ENCODE measurements at regions of chr11 and their contacts with region 1.

Region 1: GRCh38 chr11:44315947-44316658 is 6.2 kb upstream of the ALX4 start:
- DNase-seq: peak in 1 of 2 experiments; percentile 64
- H3K4me3 ChIP-seq: peak overlapping the region; percentile 13 to 58 (median 20); a peak in 7 of 8 replicates
- H3K27ac ChIP-seq: no peak overlapping the region
- H3K4me1 ChIP-seq: peaks cover 3 to 34% (median 22%) of the 10 kb centered on the region in 4 experiments
- H3K27me3 ChIP-seq: peaks cover 99 to 100% (median 100%) of the 10 kb centered on the region in 4 experiments
- CTCF ChIP-seq: no peak
- EP300 ChIP-seq: no peak
- POLR2A ChIP-seq: no peak
- RAD21 ChIP-seq: no peak

Region 2: GRCh38 chr11:44305470-44306051 is 10.5 kb before region 1 on chr11:
- CTCF ChIA-PET with region 1: interaction called, 14 read pairs
- POLR2A ChIA-PET with region 1: interaction called, 47 read pairs
- DNase-seq: no peak
- H3K4me3 ChIP-seq: peak overlapping the region; percentile 9 to 44 (median 22); a peak in 6 of 8 replicates
- H3K27ac ChIP-seq: no peak overlapping the region
- H3K4me1 ChIP-seq: peaks cover 0 to 26% (median 17%) of the 10 kb centered on the region in 4 experiments; a peak in 6 of 7 replicates
- H3K27me3 ChIP-seq: peaks cover 86 to 100% (median 98%) of the 10 kb centered on the region in 4 experiments
- CTCF ChIP-seq: no peak
- EP300 ChIP-seq: no peak
- POLR2A ChIP-seq: no peak
- RAD21 ChIP-seq: no peak

Region 3: DNA sequence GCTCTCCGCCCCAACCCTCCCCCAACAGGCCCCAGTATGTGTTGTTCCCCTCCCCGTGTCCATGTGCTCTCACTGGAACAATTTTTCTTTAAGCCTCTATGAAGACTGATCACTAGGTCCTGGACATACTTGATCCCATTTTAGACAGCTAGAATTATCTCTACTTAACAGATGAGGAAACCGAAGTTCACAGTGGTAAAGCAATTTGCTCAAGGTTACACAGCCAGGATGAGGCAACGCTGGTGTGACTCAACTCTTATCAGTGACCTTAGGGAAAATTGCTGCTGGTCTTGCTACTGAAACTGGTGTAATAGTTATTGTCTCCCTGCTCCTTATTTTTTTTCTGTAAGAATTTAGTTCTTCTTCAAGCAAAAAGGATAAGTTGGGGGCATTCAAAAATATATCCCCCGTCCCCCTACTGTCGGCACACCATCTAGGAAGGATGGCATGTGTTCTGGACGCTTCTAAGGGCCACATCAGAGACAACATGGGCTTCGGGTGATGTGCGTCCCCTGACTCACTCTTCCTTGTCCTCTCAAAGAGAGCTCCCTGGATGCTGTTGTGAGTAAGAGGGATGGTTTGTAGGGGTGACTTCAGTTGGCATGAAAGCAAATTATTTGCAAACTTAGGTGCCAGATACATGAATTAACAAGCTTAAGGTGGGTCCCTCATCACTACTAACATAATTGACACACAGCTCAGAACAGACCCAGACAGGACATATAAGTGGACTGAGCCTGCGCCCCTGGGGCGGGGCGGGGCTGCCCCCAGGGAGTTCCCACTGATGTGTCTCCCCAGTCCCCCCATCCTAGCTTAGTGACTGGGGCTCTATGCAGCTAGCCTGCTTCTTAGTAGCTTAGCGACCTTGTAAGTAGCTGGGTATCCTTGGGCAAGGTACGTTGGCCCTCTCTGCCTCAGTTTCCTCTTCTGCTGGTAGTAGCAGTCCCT is 17.4 kb after region 1 on chr11:
- CTCF ChIA-PET with region 1: interaction called, 8 read pairs
- POLR2A ChIA-PET with region 1: interaction called, 11 read pairs
- DNase-seq: no peak
- H3K4me3 ChIP-seq: no peak overlapping the region
- H3K27ac ChIP-seq: no peak overlapping the region
- H3K4me1 ChIP-seq: peaks cover 3 to 9% (median 5%) of the 10 kb centered on the region in 4 experiments; a peak in 6 of 7 replicates
- H3K27me3 ChIP-seq: peaks cover 7 to 68% (median 57%) of the 10 kb centered on the region in 4 experiments
- CTCF ChIP-seq: no peak
- EP300 ChIP-seq: no peak
- POLR2A ChIP-seq: no peak
- RAD21 ChIP-seq: no peak